ENCODE measurements at regions of chr2 and their contacts with region 1.

Region 1: DNA sequence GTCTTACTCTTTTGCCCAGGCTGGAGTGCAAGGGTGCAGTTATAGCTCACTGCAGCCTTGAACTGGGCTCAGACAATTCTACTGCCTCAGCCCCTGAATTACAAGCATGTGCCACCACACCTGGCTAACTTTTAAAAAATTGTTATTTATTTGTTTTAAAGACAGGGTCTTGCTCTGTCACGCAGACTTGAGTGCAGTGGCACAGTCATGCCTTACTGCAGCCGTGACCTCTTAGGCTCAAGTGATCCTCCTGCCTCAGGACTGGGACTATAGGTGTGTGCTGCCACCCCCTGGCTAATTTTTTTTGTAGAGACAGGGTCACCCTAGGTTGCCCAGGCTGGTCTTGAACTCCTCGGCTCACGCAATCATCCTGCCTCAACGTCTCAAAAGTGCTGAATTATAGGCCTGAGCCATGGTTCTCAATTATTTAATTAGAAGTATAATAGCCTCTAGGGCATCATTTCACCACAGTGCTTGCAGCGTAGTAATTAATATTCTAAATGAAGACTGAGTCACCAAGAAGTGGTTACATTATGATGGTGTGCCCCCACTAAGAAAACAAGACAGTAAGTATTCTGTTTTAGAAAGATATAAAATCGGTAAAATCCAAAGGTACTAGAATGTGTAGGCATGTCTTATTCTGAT is 69.6 kb downstream of the EML4 start:
- DNase-seq: no peak
- ATAC-seq: peak; percentile 62 to 88 (median 84)
- H3K4me3 ChIP-seq: no peak overlapping the region
- H3K27ac ChIP-seq: no peak overlapping the region
- H3K4me1 ChIP-seq: no peaks in the 10 kb centered on the region
- H3K27me3 ChIP-seq: no peaks in the 10 kb centered on the region
- CTCF ChIP-seq: peak; percentile 46

Region 2: DNA sequence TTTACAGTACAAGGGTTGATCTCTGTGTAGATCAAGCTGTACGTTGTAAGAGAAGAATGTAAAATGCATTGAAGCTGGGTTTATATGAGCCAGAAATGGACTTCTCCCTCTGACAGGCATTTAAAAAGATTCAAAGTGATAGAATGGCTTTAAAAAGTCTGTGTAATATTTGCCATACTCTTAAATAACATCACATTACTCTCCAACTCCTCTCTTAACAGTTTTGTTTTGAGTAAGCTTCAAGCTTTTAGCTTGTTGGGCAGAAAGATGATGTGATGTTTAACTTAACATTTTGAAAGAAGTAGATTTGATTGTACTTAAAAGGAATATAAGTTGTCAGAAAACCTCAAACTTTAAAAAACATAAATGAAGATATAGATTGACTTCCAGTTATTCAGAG is 50.0 kb after region 1 on chr2:
- intact Hi-C with region 1: loop called in 1 of 2 experiments (anchors 2 kb)
- DNase-seq: no peak
- ATAC-seq: no peak
- H3K4me3 ChIP-seq: no peak overlapping the region
- H3K27ac ChIP-seq: no peak overlapping the region
- H3K4me1 ChIP-seq: no peaks in the 10 kb centered on the region
- H3K27me3 ChIP-seq: no peaks in the 10 kb centered on the region
- CTCF ChIP-seq: no peak

Measured in psoas muscle (tissue), 8 donors.